ENCODE measurements at regions of chr17 and their contacts with region 1.

Region 1: DNA sequence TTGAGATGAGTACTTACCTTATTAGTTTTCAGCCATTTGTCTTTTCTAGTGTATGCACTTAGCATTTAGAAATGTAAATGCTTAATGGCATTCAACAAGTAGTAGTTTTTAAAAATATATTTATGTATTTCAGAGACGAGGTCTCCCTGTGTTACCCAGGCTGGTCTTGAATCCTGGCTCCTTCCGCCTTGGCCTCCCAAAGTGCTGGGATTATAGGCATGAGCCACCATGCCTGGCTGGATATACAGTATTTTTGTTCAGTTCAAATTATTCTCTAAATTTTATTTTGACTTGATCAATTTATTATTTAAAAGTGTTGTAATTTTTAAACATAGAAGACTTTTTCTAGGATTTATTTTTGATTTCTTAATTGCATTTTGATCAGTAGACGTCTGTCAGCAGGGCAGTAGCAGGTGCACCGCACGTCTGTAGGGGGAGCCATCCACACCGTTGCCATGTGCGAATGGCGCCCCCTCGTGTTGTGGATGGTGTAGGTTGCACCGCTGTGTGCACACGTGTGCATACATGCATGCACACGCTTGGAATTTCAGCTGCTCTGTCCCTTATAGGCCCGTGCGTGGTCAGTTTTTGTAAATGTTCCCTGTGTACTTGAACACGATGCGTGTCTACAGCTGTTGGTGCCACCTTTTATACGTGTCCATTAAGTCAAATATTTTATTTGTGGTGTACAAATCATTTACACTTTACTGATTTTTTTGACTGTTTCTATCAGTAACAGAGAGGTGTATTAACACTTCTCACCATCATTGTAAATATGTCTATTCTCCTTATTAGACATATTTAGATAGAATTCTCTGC is 30.6 kb downstream of the RPTOR start:
- DNase-seq: peak; percentile 96
- H3K4me3 ChIP-seq: no peak overlapping the region; a peak in 1 of 4 replicates
- H3K27ac ChIP-seq: no peak overlapping the region
- H3K4me1 ChIP-seq: no peaks in the 10 kb centered on the region
- H3K27me3 ChIP-seq: no peaks in the 10 kb centered on the region
- CTCF ChIP-seq: peak; percentile 100
- EP300 ChIP-seq: no peak
- RAD21 ChIP-seq: peak; percentile 97

Region 2: DNA sequence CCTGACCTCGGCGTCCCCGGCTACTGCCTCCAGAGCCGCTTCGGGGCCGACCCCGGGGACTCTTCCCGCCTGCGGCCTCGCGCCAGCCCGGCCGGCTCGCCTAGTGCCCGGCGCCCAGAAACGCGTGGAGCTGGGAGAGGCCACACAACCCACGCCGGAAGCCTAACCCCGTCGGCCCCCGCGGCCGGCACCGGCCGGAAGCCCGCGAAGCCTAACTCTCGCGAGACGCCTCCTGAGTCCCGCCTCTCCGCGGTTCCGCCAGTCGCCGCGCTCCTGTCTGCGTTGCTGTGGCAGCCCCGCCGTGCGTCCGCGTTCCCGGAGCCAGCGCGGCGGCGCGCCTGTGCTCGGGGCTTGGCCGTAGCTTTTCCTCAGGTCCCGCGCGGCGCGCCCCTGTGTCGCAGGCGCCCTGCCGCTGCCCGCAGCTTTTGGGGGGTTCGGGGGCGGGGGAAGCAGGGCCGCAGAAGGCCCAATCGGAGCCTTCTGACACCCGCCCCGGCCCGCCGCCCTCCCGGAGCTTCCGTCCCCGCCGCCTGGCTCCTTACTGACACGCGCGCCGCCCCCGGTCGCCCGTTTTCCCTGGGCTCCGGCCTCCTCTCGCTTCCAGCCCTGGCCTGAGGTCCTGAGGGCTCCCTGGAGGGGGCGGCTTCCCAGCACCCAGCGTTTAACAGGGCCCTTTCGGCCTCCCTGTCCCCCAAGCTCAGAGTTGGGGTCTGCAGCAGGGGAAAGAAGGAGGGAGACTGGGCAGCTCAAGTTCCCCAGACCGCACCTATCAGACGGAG is 120.5 kb before region 1 on chr17:
- CTCF ChIA-PET with region 1: interaction called, 11 read pairs
- POLR2A ChIA-PET with region 1: interaction called, 3 read pairs
- DNase-seq: peak; percentile 100
- H3K4me3 ChIP-seq: peak overlapping the region; percentile 71 to 78
- H3K27ac ChIP-seq: peak overlapping the region; percentile 79 to 97
- H3K4me1 ChIP-seq: peaks cover 0 to 34% of the 10 kb centered on the region in 2 experiments; a peak in 1 of 4 replicates
- H3K27me3 ChIP-seq: no peaks in the 10 kb centered on the region
- CTCF ChIP-seq: no peak; the same call in 1 of the 2 replicates
- EP300 ChIP-seq: no peak
- RAD21 ChIP-seq: no peak

Region 3: GRCh38 chr17:80491478-80492342 is 83.6 kb before region 1 on chr17:
- CTCF ChIA-PET with region 1: interaction called, 21 read pairs
- POLR2A ChIA-PET with region 1: no interaction called
- DNase-seq: peak; percentile 91
- H3K4me3 ChIP-seq: no peak overlapping the region; a peak in 1 of 4 replicates
- H3K27ac ChIP-seq: no peak overlapping the region
- H3K4me1 ChIP-seq: peaks cover 0 to 3% of the 10 kb centered on the region in 2 experiments; a peak in 2 of 4 replicates
- H3K27me3 ChIP-seq: peaks cover 5% of the 10 kb centered on the region
- CTCF ChIP-seq: no peak
- EP300 ChIP-seq: no peak
- RAD21 ChIP-seq: no peak

Region 4: DNA sequence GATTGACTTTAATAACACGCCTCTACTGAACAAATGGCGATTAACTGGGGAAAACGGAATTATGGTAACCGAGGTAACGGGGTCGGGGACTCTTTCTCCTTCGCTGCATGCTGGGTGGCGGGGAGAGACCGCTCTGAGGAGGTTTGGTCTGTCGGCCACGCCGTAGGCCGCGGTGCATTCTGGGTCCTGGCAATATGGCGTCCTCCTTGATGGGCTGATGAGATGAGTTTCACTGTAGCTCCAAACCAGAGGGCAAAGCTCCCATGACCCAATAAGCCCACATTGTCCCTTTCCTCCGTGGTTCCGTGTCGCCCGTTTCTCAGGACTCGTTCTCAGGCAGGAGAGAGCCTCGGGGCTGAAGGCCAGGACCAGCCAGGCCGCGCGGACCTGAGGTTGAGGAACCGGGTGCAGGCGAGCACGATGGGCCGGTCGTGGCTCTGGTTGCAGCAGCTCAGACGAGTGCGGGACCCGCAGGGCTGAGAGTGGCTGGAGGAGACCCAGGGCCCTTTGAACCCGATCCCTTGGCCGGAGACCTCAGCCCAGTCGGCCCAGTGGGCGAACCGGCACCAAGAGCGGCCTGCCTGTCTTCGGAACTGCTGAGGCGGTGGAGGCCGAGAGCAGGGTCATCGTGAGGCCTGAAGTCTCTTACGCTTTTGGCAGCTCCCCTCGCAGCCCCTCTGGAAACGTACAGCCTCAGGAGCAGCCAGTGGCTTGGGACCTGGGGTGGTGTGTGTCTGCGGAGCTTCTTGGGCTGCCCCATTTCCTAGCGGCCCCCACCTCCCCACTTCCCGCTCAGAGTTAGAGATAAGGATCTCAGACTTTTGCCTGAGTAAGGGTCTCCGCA is 30.4 kb before region 1 on chr17 and contains the start of gene RPTOR:
- CTCF ChIA-PET with region 1: interaction called, 16 read pairs
- POLR2A ChIA-PET with region 1: no interaction called
- DNase-seq: peak; percentile 98
- H3K4me3 ChIP-seq: peak within 1 kb of the TSS; percentile 79 to 90
- H3K27ac ChIP-seq: peak within 1 kb of the TSS; percentile 64 to 78
- H3K4me1 ChIP-seq: peaks cover 11 to 13% of the 10 kb centered on the region in 2 experiments; a peak in 3 of 4 replicates
- H3K27me3 ChIP-seq: no peaks in the 10 kb centered on the region
- CTCF ChIP-seq: no peak
- EP300 ChIP-seq: peak in 1 of 2 experiments; percentile 29; a peak in 1 of 4 replicates
- RAD21 ChIP-seq: no peak
- polyA plus RNA-seq, gene RPTOR: 9.0 and 14.9 TPM in 2 replicates

Region 5: DNA sequence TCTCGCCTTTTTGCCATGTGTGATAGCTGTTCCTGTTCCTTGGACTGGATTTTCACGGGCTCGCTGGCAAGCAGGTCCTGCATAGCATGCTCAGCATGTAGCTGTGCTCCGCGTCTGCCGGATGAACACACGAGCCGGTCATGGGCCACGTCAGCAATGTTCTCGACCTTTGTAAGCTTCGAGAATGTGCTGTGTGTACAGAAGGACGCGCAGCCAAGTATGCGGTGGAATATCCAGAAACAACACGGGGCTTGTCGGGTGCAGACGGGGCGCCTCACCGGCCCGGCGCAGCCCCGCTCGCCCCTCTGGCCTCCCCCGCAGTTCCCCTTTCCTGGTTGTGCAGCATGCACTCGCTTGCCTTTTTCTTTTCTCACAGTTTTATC is 11.6 kb after region 1 on chr17:
- CTCF ChIA-PET with region 1: interaction called, 61 read pairs
- POLR2A ChIA-PET with region 1: no interaction called
- DNase-seq: no peak
- H3K4me3 ChIP-seq: no peak overlapping the region
- H3K27ac ChIP-seq: peak overlapping the region in 1 of 2 experiments; percentile 39; a peak in 1 of 4 replicates
- H3K4me1 ChIP-seq: peaks cover 16 to 18% of the 10 kb centered on the region in 2 experiments; a peak in 3 of 4 replicates
- H3K27me3 ChIP-seq: no peaks in the 10 kb centered on the region
- CTCF ChIP-seq: no peak
- EP300 ChIP-seq: no peak
- RAD21 ChIP-seq: no peak

Region 6: GRCh38 chr17:80899402-80900268 is 324.4 kb after region 1 on chr17:
- CTCF ChIA-PET with region 1: interaction called, 10 read pairs
- POLR2A ChIA-PET with region 1: no interaction called
- DNase-seq: peak; percentile 87
- H3K4me3 ChIP-seq: no peak overlapping the region
- H3K27ac ChIP-seq: no peak overlapping the region
- H3K4me1 ChIP-seq: no peaks in the 10 kb centered on the region
- H3K27me3 ChIP-seq: no peaks in the 10 kb centered on the region
- CTCF ChIP-seq: peak; percentile 89
- EP300 ChIP-seq: no peak
- RAD21 ChIP-seq: peak; percentile 78